ENCODE measurements at regions of chr18 and their contacts with region 1.

Region 1: DNA sequence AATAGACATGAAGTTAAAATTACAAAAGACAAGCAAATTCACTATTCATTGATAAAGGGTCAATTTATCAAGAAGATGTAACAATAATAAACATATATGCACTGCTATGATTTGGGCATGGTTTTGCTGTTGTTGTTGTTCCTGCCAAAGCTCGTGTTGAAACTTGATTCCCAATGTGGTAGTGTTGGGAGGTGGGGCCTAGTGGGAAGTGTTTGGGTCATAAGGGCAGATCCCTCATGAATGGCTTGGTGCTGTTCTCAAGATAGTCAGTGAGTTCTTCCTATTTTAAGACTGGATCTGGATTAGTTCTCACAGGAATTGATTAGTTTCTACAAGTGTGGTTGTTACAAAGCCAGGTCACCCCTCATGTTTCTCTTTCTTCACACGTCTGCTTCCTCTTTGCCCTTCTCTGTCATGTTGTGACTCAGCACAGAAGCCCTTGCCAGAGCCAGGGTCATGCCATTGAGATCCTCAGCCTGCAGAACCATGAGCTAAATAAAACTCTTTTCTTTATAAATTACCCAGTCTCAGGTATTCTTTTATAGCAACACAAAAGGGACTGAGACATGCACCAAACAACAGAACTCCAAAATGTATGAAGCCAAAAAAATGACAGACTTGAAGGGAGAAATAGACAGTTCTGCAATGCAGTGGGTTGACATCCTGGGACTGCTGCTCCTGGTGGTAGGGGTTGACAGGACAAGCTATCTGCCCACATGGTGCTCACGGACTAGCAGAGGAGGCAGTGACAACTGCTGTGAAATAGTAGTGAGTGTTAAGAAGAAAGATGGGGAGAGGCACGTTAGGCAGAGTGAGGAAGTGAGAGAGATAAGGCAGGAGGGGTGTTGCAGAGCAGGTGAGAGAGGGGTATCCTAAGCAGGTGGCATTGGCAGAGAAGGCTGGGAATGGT is 18.6 kb upstream of the SKA1 start:
- DNase-seq: no peak
- ATAC-seq: peak; percentile 61
- H3K4me3 ChIP-seq: no peak overlapping the region
- H3K4me1 ChIP-seq: no peaks in the 10 kb centered on the region
- CTCF ChIP-seq: no peak

Region 2: DNA sequence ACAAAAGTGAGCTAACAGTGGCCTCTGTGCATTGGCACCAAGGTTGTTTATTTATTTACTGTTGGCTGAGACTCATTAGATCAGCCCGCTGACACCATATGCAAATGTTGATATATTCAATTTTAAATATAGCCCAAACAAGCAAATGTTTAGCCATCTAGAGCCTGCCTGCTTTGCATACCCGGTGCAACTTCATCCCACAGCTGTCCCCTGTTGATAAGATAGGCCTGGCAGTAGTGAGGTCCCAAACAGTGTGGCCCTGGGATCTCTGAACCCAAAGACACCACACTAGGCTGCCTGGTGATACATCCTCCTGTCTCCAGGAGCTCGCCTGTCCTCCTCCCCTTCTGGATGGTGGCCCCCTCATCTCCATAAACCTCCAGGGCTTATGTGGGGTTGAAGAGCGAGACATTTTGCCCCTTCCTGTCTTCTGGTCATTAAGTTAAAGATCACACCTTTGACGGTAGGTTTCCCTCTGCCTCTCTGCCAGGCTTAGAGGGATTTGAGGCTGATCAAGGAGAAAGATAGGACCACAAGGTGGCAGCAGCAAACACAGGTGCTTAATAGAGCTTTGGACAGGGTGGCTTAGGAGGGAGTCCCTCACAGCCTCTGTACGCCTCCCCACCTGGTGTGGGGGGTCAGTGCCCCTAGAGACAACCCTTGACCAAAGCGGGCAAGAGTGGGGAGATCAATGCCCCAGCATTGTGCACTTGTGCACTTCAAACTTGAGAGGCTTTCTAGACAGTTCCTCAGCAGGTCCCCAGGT is 137.7 kb before region 1 on chr18:
- intact Hi-C with region 1: loop called in 1 of 2 experiments (anchors 5 kb)
- DNase-seq: peak in 2 of 3 donors; percentile 27 to 83
- ATAC-seq: peak; percentile 74
- H3K4me3 ChIP-seq: no peak overlapping the region
- H3K4me1 ChIP-seq: no peaks in the 10 kb centered on the region
- CTCF ChIP-seq: no peak

Region 3: DNA sequence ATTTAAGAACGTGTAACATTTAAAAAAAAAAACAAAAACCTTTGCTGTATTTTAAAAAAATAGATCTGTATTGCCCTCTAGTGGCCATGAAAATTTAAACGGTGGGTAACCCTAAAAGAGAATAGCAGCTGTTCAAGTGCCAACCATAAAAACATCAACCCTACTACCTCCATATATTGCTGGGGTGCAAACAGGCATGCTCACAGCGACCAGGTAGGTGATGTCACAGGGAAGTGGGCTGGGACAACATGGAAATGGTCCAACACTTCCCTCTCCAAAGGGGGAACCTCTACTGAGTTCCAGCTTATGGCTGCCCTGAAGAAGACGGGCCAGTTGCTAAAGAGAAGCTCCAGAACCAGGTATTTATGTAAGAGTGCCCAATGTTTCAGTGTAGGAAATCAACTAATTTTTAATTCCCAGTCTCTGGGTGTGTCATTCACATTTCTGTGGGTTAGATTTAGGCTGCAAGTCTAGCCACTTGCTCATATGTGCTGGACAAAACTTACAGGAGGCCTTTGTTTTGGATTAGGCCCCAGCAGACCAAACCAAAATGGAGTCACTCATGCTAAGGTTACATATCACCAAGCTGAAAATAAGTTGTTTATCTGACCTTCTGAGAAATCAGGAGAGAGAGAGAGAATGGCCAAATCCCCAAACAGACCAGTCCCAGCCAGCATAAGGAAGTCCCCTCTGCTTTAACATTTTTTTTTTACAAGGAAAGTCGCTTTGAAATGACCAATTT is 73.1 kb after region 1 on chr18:
- intact Hi-C with region 1: no loop called
- DNase-seq: peak in 1 of 3 donors; percentile 57
- ATAC-seq: peak; percentile 51
- H3K4me3 ChIP-seq: no peak overlapping the region
- H3K4me1 ChIP-seq: no peaks in the 10 kb centered on the region
- CTCF ChIP-seq: no peak

Measured in mucosa of descending colon (tissue), 3 donors.